ENCODE measurements at regions of chr22 and their contacts with region 1.

Region 1: DNA sequence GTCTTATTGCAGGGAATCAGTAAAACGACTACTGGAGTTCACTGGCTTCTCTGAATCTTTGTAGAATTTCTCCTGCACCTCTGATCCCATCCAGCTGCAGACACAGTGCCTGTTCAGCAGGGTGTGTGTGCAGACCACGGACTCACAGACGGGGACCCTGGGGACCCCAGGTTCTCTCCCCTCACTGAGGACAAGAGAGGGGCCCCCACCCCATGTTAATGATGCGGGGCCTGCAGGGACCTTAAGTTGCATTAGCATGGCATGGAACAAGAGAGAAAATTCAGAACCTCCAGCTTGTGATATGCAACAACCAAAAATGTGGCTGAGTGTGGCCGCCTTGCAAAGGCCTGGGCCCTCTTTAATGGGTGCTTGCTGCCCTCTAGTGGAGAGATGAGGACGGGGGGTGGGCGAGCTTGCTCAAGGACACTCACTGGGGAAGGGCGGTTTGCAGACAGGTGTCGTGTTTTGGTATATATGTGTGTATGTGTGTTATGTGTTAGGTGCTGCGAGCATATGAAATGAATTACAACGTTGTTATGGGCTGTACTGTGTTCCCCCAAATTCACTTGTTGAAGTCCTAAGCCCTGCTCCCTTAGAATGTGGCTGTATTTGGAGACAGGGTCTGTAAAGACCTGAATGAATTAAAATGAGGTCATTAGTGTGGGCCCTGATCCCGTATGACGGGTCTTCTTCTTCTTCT is 84.4 kb upstream of the SEPTIN5 start:
- DNase-seq: peak; percentile 12
- H3K4me3 ChIP-seq: no peak overlapping the region
- CTCF ChIP-seq: peak; percentile 92

Region 2: GRCh38 chr22:19143967-19144400 is 485.9 kb before region 1 on chr22:
- CTCF ChIA-PET with region 1: interaction called, 20 read pairs
- POLR2A ChIA-PET with region 1: no interaction called
- DNase-seq: no peak
- H3K4me3 ChIP-seq: peak overlapping the region; percentile 97
- CTCF ChIP-seq: no peak

Region 3: GRCh38 chr22:19473578-19473977 is 156.3 kb before region 1 on chr22:
- CTCF ChIA-PET with region 1: interaction called, 19 read pairs
- POLR2A ChIA-PET with region 1: no interaction called
- DNase-seq: no peak
- H3K4me3 ChIP-seq: no peak overlapping the region
- CTCF ChIP-seq: no peak

Region 4: DNA sequence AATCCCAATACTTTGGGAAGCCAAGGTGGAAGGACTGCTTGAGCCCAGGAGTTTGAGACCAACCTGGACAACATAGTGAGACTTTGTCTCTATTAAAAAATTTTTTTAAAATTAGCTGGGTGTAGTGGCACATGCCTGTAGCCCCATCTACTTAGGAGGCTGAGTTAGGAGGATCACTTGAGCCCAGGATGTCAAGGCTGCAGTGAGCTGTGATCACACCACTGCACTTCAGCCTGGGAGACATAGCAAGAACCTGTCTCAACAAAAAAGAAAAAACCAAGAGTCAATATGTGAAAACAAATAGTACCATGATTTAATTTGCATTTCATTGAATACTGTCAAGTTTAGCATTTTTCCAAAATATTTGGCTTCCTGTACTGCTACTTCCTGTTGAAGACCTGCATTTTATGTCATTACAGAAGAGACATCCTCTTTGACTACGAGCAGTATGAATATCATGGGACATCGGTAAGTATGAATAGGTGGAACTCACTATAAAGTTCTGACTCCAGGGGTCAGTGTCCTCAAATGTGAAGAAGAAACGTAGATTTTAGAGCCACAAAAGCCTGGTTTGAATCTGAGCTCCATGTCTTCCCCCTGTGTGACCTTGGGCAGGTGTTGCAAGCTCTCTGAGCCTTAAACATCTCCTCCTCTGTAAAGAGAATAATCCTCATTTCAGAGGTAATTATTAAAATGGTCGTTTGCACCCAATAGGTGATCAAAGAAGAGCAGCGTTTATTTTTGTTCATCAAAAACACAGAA is 134.1 kb before region 1 on chr22:
- CTCF ChIA-PET with region 1: interaction called, 68 read pairs
- POLR2A ChIA-PET with region 1: no interaction called
- DNase-seq: no peak
- H3K4me3 ChIP-seq: no peak overlapping the region
- CTCF ChIP-seq: peak; percentile 5

Region 5: GRCh38 chr22:19548964-19549363 is 80.9 kb before region 1 on chr22:
- CTCF ChIA-PET with region 1: no interaction called
- POLR2A ChIA-PET with region 1: no interaction called
- DNase-seq: no peak
- H3K4me3 ChIP-seq: no peak overlapping the region
- CTCF ChIP-seq: no peak

Region 6: GRCh38 chr22:19619144-19620009 is 10.5 kb before region 1 on chr22:
- CTCF ChIA-PET with region 1: interaction called, 22 read pairs
- POLR2A ChIA-PET with region 1: no interaction called
- DNase-seq: no peak
- H3K4me3 ChIP-seq: no peak overlapping the region
- CTCF ChIP-seq: no peak

Region 7: GRCh38 chr22:19717691-19718455 is 88.0 kb after region 1 on chr22:
- CTCF ChIA-PET with region 1: interaction called, 45 read pairs
- POLR2A ChIA-PET with region 1: no interaction called
- DNase-seq: no peak
- H3K4me3 ChIP-seq: peak overlapping the region; percentile 73
- CTCF ChIP-seq: peak; percentile 91

Region 8: DNA sequence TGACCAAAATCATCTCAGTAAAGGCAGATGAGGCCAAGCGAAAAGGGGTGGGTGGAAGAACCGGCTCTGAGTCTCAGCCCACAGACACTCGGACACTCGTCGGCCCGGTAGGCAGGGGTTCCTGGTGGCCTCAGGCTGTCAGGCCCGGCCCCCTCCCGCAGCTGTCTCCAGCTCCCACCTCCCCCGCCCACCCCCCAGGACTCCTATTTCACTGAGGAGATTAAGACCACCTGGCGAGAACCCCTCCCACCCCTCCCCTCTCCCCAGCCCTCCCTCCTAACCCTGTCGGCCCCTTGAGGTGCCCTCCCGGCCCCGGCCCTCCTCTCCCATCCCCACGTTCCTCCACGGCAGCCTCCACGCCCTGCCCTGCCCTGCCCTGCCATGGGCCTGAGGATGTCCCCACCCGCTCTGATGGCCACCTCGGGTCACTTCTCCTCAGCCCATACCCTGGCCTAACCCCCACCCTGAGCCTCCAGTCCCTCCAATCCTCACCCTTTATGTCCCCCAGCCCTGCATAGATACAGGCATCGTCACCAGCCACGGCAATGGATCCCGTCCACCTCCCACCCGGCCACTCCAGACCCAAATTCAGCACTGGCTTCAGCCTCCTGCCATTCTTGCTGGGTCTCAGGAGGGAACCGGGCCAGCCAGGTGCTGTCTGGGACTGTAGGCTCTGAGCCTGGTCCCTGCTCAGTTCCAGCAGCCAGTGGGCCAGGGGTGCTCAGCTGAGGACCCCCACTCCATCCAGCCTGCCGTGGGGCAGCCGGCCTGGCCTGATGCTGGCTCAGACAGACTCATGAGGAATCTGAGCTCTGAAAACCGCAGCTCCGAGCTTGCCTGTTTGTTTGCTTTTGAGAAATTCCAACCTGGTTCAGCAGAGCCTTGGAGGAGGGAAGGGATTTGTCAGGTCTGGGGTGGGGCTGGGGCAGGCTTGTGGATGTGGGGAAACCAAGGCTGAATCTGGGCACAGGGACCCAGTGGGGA is 120.9 kb after region 1 on chr22:
- CTCF ChIA-PET with region 1: no interaction called
- POLR2A ChIA-PET with region 1: no interaction called
- DNase-seq: no peak
- H3K4me3 ChIP-seq: no peak overlapping the region
- CTCF ChIP-seq: no peak

Region 9: GRCh38 chr22:19766511-19767426 is 136.9 kb after region 1 on chr22:
- CTCF ChIA-PET with region 1: no interaction called
- POLR2A ChIA-PET with region 1: no interaction called
- DNase-seq: no peak
- H3K4me3 ChIP-seq: no peak overlapping the region
- CTCF ChIP-seq: no peak